ENCODE measurements at regions of chr1 and their contacts with region 1.

Region 1: DNA sequence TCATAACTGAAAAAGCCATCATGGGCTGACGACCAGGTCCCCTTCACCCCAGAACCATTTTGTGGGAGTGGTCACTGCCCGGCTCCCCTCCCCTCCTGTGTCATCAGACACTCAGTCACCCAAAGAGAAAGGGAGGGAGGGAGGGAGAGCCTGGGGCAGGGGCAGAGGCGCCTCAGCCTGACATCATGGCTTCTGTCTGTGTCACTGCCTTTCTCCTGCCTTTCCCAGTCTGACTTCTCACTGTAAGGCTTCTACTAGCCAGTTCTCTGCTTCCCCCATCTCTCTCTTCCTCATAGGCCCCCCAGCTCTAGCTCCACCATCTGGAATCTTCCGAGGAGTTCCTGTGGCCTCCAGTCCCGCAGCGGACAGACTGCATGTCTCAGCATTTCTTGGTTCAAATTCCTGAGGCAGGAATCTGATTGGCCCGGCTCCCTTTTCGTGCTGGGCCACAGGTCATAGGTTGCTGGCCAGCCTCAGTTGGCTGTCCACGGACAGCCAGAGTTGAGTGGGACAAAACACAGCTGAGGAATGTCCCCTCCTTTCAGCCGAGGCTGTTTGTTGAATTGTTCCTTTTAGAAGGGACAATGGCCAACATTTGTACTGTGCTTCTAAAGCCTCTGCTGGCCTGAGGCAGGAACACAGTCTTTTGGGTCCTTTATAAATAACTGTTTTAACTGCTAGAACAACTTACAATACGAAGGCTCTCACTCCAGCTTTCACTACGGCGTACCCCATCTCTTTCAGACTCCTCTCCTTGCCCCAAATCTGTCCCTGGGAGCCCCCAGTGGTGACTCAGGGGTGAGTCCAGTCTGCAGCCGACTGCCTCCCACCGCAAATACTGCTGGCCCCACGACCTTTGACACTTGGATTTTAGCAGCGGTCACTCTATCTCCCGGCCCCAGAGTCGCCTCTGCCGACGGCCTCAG is 18.7 kb upstream of the KANK4 start:
- DNase-seq: peak in 1 of 2 experiments; percentile 64
- H3K4me3 ChIP-seq: no peak overlapping the region; a peak in 1 of 8 replicates
- H3K27ac ChIP-seq: no peak overlapping the region
- H3K4me1 ChIP-seq: peaks cover 0 to 17% (median 6%) of the 10 kb centered on the region in 4 experiments; a peak in 6 of 7 replicates
- H3K27me3 ChIP-seq: no peaks in the 10 kb centered on the region
- CTCF ChIP-seq: peak in 2 of 3 experiments; percentile 33 to 37; a peak in 3 of 4 replicates
- EP300 ChIP-seq: no peak
- POLR2A ChIP-seq: no peak
- RAD21 ChIP-seq: peak in 1 of 2 experiments; percentile 41; a peak in 2 of 4 replicates

Region 2: DNA sequence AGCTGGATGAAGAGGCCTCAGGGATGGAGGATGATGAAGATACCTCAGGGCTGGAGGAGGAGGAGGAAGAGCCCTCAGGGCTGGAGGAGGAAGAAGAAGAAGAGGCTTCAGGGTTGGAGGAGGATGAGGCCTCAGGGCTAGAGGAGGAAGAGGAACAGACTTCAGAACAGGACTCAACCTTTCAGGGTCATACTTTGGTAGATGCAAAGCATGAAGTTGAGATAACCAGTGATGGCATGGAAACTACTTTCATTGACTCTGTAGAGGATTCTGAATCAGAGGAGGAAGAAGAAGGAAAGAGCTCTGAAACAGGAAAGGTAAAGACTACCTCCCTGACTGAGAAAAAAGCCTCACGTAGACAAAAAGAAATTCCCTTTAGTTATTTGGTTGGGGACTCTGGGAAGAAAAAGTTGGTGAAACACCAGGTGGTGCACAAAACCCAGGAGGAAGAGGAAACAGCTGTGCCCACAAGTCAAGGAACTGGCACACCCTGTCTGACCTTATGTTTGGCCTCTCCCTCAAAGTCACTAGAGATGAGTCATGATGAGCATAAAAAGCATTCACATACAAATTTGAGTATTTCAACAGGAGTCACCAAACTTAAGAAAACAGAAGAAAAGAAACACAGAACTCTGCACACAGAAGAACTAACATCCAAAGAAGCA is 127.9 kb before region 1 on chr1:
- CTCF ChIA-PET with region 1: no interaction called
- POLR2A ChIA-PET with region 1: interaction called, 16 read pairs
- DNase-seq: no peak
- H3K4me3 ChIP-seq: no peak overlapping the region
- H3K27ac ChIP-seq: no peak overlapping the region
- H3K4me1 ChIP-seq: no peaks in the 10 kb centered on the region; a peak in 1 of 7 replicates
- H3K27me3 ChIP-seq: no peaks in the 10 kb centered on the region
- CTCF ChIP-seq: no peak
- EP300 ChIP-seq: no peak
- POLR2A ChIP-seq: peak; percentile 21 to 38
- RAD21 ChIP-seq: no peak

Region 3: GRCh38 chr1:62325081-62325480 is 12.9 kb before region 1 on chr1:
- CTCF ChIA-PET with region 1: interaction called, 13 read pairs
- POLR2A ChIA-PET with region 1: interaction called, 3 read pairs
- DNase-seq: no peak
- H3K4me3 ChIP-seq: no peak overlapping the region
- H3K27ac ChIP-seq: no peak overlapping the region
- H3K4me1 ChIP-seq: peaks cover 0 to 6% (median 3%) of the 10 kb centered on the region in 4 experiments; a peak in 3 of 7 replicates
- H3K27me3 ChIP-seq: peaks cover 0 to 4% (median 4%) of the 10 kb centered on the region in 4 experiments; a peak in 6 of 7 replicates
- CTCF ChIP-seq: no peak
- EP300 ChIP-seq: no peak
- POLR2A ChIP-seq: no peak
- RAD21 ChIP-seq: no peak

Measured in H1 (cell line).